MCF 10A (cell line): ENCODE measurements at regions of chr6 and their contacts with region 1.

Region 1: DNA sequence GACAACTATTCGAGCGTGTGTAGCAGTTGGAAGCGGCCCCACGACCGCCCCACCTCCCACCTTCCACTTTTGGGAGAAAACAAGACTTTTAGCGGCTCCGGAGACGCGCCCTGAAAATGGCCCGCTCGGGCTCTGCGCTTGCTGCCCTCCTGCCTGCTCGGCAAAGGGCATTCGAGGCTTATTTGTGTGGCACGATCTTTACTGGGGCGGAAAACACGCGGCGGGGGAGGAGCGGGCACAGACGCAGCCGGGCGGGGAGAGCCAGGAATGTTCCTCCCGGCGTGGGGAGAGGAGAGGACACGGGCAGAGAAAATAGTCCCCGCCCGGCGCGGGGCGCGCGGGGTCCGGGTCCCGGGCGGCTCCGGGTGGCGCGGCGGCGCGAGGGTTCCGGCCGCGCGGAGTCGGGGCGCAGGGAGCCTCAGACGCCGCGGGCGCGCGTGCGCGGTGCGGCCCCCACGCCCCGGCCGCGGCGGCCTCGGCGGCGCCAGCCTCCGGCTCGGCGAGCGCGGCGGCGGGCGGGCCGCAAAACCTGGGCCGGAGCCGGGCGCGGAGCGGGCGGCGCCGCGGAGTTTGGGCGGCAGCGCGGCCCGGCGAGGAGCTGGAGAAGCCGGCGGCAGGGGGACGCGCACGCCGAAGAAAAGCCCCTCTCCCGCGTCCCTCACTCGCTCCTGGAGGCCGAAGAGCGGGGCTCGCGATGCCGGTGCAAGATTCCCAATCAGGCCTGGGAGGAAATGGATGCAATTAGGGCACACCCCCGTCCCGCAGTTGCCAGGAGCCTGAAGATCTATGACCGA is 90.0 kb upstream of the ARID1B start:
- DNase-seq: peak; percentile 70
- H3K4me3 Mint-ChIP-seq: peak overlapping the region; percentile 74
- H3K27ac Mint-ChIP-seq: peak overlapping the region; percentile 61
- H3K4me1 Mint-ChIP-seq: peaks cover 8% of the 10 kb centered on the region
- H3K27me3 Mint-ChIP-seq: no peaks in the 10 kb centered on the region
- CTCF ChIP-seq: no peak

Region 2: DNA sequence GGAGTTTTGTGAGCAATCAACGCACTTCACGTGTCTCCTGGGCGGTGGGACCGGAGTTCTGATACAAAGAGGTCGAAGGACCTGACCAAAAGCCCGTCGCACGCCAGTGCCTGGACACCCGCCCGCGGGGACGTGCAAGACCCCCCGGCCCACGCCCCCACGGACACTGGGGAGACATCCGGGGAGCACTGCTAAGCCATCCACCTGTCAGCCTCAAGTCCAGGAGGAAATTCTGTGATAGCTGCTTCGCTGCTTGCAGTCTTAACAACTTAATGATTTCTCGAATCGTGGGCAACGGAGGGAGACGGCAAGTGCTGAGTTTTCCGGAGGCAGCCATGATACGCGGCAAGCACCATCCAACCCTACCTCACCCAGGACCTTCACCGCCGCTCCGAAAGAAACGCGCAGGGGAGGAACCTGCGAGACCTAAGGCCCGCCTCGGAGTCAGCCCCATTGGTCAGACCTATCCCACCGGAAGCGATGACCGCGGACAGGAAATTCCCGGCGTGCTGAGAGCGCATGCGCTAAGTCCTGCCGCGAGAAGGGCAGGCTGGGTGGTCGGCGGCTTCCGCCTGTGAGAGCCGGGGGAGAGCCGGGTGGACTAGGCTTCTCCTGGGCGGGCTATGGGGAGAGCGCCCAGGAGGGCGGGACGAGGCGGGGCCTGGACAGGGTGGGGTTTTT is 1373.0 kb before region 1 on chr6 and contains the start of gene TFB1M:
- CTCF ChIA-PET with region 1: no interaction called
- POLR2A ChIA-PET with region 1: interaction called, 10 read pairs
- intact Hi-C with region 1: loop called (anchors 5 kb)
- DNase-seq: peak; percentile 98
- H3K4me3 Mint-ChIP-seq: peak within 1 kb of the TSS; percentile 79
- H3K27ac Mint-ChIP-seq: peak within 1 kb of the TSS; percentile 97
- H3K4me1 Mint-ChIP-seq: peaks cover 8% of the 10 kb centered on the region
- H3K27me3 Mint-ChIP-seq: no peaks in the 10 kb centered on the region
- CTCF ChIP-seq: no peak
- total RNA-seq, gene TFB1M: 26.8 and 31.0 TPM in 2 replicates

Region 3: GRCh38 chr6:156205678-156206077 is 481.5 kb before region 1 on chr6:
- CTCF ChIA-PET with region 1: no interaction called
- POLR2A ChIA-PET with region 1: no interaction called
- intact Hi-C with region 1: no loop called
- DNase-seq: no peak
- H3K4me3 Mint-ChIP-seq: no peak overlapping the region
- H3K27ac Mint-ChIP-seq: no peak overlapping the region
- H3K4me1 Mint-ChIP-seq: no peaks in the 10 kb centered on the region
- H3K27me3 Mint-ChIP-seq: no peaks in the 10 kb centered on the region
- CTCF ChIP-seq: no peak

Region 4: DNA sequence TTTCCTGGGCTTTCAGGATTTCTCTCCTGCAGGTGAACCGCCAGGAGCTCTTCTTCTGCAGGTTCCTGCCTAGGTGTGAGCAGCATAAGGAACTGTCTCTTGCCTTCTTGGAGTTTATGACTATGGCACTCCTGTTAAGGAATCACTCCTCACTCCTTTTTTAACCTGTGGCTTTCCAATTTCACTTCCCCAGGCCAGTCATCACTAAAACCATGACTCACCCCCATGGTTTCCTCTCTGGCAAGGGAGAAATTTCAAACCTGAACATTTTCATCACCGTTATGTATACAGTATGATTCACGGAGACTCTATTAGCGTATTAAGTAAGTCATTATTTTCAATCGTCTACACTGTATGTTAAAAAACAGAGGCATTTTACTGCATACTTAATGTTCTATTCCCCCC is 11.8 kb after region 1 on chr6:
- CTCF ChIA-PET with region 1: interaction called, 6 read pairs
- POLR2A ChIA-PET with region 1: interaction called, 11 read pairs
- intact Hi-C with region 1: no loop called
- DNase-seq: peak; percentile 90
- H3K4me3 Mint-ChIP-seq: no peak overlapping the region
- H3K27ac Mint-ChIP-seq: no peak overlapping the region
- H3K4me1 Mint-ChIP-seq: peaks cover 11% of the 10 kb centered on the region
- H3K27me3 Mint-ChIP-seq: no peaks in the 10 kb centered on the region
- CTCF ChIP-seq: no peak

Region 5: DNA sequence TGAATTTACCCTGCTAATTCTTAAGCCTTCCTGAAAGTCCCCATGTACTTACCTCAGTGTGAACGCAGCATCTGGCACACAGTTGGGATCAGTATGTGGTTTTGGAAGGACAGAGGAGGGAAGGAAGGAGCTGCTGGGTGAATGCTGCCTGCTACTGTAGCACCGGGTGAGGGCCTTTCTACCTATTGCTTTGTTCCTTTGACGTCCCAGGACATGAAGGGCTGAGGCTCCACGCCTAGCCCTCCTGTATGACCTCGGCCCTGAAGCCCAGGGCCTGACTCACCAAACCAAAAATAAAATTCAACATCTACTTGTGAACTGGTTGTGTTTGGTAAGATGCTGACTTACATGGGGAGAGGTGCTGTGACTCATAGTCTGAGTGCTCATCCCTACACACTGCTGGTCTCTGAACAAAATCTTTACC is 141.1 kb after region 1 on chr6:
- CTCF ChIA-PET with region 1: no interaction called
- POLR2A ChIA-PET with region 1: interaction called, 3 read pairs
- intact Hi-C with region 1: loop called (anchors 1 kb)
- DNase-seq: peak; percentile 93
- H3K4me3 Mint-ChIP-seq: peak overlapping the region; percentile 24
- H3K27ac Mint-ChIP-seq: peak overlapping the region; percentile 81
- H3K4me1 Mint-ChIP-seq: peaks cover 33% of the 10 kb centered on the region
- H3K27me3 Mint-ChIP-seq: no peaks in the 10 kb centered on the region
- CTCF ChIP-seq: no peak

Region 6: GRCh38 chr6:157021344-157021992 is 334.3 kb after region 1 on chr6:
- CTCF ChIA-PET with region 1: no interaction called
- POLR2A ChIA-PET with region 1: interaction called, 7 read pairs
- intact Hi-C with region 1: loop called (anchors 2 kb)
- DNase-seq: peak; percentile 88
- H3K4me3 Mint-ChIP-seq: peak overlapping the region; percentile 90
- H3K27ac Mint-ChIP-seq: peak overlapping the region; percentile 99
- H3K4me1 Mint-ChIP-seq: peaks cover 10% of the 10 kb centered on the region
- H3K27me3 Mint-ChIP-seq: no peaks in the 10 kb centered on the region
- CTCF ChIP-seq: peak; percentile 46